ENCODE measurements at regions of chr22 and their contacts with region 1.

Region 1: GRCh38 chr22:30947816-30948454 is 20.6 kb downstream of the MORC2 start:
- DNase-seq: no peak
- H3K4me3 ChIP-seq: no peak overlapping the region
- H3K27ac ChIP-seq: no peak overlapping the region
- H3K4me1 ChIP-seq: peaks cover 0 to 28% (median 7%) of the 10 kb centered on the region in 6 donors
- H3K27me3 ChIP-seq: no peaks in the 10 kb centered on the region
- CTCF ChIP-seq: peak in 10 of 11 experiments; percentile 15 to 74 (median 49)
- POLR2A ChIP-seq: no peak

Region 2: GRCh38 chr22:30649430-30650007 is 298.4 kb before region 1 on chr22:
- intact Hi-C with region 1: no loop called
- DNase-seq: no peak
- H3K4me3 ChIP-seq: no peak overlapping the region
- H3K27ac ChIP-seq: no peak overlapping the region
- H3K4me1 ChIP-seq: peaks cover 0 to 5% (median 2%) of the 10 kb centered on the region in 6 donors
- H3K27me3 ChIP-seq: no peaks in the 10 kb centered on the region
- CTCF ChIP-seq: no peak
- POLR2A ChIP-seq: no peak

Region 3: GRCh38 chr22:31080848-31081649 is 133.1 kb after region 1 on chr22 and contains the start of gene SMTN:
- intact Hi-C with region 1: loop called (anchors 5 kb)
- DNase-seq: peak; percentile 97
- H3K4me3 ChIP-seq: peak within 1 kb of the TSS; percentile 69 to 95 (median 82)
- H3K27ac ChIP-seq: peak within 1 kb of the TSS; percentile 64 to 96 (median 92)
- H3K4me1 ChIP-seq: peaks cover 12 to 69% (median 56%) of the 10 kb centered on the region in 6 donors
- H3K27me3 ChIP-seq: no peaks in the 10 kb centered on the region
- CTCF ChIP-seq: peak in 2 of 11 experiments; percentile 7 to 12
- POLR2A ChIP-seq: peak; percentile 47 to 88 (median 75)
- total RNA-seq, gene SMTN: 124 to 230 (median 159) TPM

Region 4: GRCh38 chr22:31230871-31231621 is 283.1 kb after region 1 on chr22:
- intact Hi-C with region 1: loop called (anchors 10 kb)
- DNase-seq: no peak
- H3K4me3 ChIP-seq: peak overlapping the region in 1 of 8 donors; percentile 58
- H3K27ac ChIP-seq: peak overlapping the region; percentile 61 to 94 (median 90)
- H3K4me1 ChIP-seq: peaks cover 22 to 98% (median 61%) of the 10 kb centered on the region in 6 donors
- H3K27me3 ChIP-seq: no peaks in the 10 kb centered on the region
- CTCF ChIP-seq: peak; percentile 45 to 86 (median 71)
- POLR2A ChIP-seq: no peak